CD4-positive, alpha-beta memory T cell (primary cell): ENCODE measurements at regions of chr1 and their contacts with region 1.

Region 1: GRCh38 chr1:70205434-70206118 is at the start of gene LRRC40:
- DNase-seq: peak; percentile 95 to 98 (median 95)
- H3K4me3 ChIP-seq: peak within 1 kb of the TSS; percentile 68 to 93
- H3K4me3 Mint-ChIP-seq: peak within 1 kb of the TSS; percentile 97 to 99 (median 98)
- H3K27ac ChIP-seq: peak within 1 kb of the TSS; percentile 97
- H3K27ac Mint-ChIP-seq: peak within 1 kb of the TSS; percentile 99 to 100 (median 100)
- H3K4me1 ChIP-seq: peaks cover 71% of the 10 kb centered on the region
- H3K4me1 Mint-ChIP-seq: peaks cover 40 to 89% (median 62%) of the 10 kb centered on the region in 4 donors
- H3K27me3 ChIP-seq: no peaks in the 10 kb centered on the region
- H3K27me3 Mint-ChIP-seq: no peaks in the 10 kb centered on the region
- total RNA-seq, gene LRRC40: 11.3 to 11.6 TPM

Region 2: GRCh38 chr1:70354332-70355110 is 148.9 kb after region 1 on chr1 and contains the start of gene ANKRD13C:
- CTCF ChIA-PET with region 1: no interaction called
- POLR2A ChIA-PET with region 1: interaction called, 15 read pairs
- intact Hi-C with region 1: loop called (anchors 1 kb)
- DNase-seq: peak; percentile 94 to 97 (median 95)
- H3K4me3 ChIP-seq: peak within 1 kb of the TSS; percentile 15 to 89
- H3K4me3 Mint-ChIP-seq: peak within 1 kb of the TSS; percentile 90 to 99 (median 95)
- H3K27ac ChIP-seq: peak within 1 kb of the TSS; percentile 92
- H3K27ac Mint-ChIP-seq: peak within 1 kb of the TSS; percentile 96 to 100 (median 99)
- H3K4me1 ChIP-seq: peaks cover 45% of the 10 kb centered on the region
- H3K4me1 Mint-ChIP-seq: peaks cover 24 to 53% (median 41%) of the 10 kb centered on the region in 4 donors
- H3K27me3 ChIP-seq: no peaks in the 10 kb centered on the region
- H3K27me3 Mint-ChIP-seq: no peaks in the 10 kb centered on the region
- total RNA-seq, gene ANKRD13C: 29.1 to 34.0 TPM

Region 3: GRCh38 chr1:70410604-70411359 is 205.2 kb after region 1 on chr1 and contains the start of gene CTH:
- CTCF ChIA-PET with region 1: no interaction called
- POLR2A ChIA-PET with region 1: interaction called, 11 read pairs
- intact Hi-C with region 1: loop called (anchors 1 kb)
- DNase-seq: peak; percentile 91 to 95 (median 93)
- H3K4me3 ChIP-seq: peak within 1 kb of the TSS; percentile 64 to 66
- H3K4me3 Mint-ChIP-seq: peak within 1 kb of the TSS; percentile 90 to 99 (median 97)
- H3K27ac ChIP-seq: peak within 1 kb of the TSS; percentile 77
- H3K27ac Mint-ChIP-seq: peak within 1 kb of the TSS; percentile 94 to 99 (median 96)
- H3K4me1 ChIP-seq: peaks cover 16% of the 10 kb centered on the region
- H3K4me1 Mint-ChIP-seq: peaks cover 13 to 22% (median 18%) of the 10 kb centered on the region in 4 donors
- H3K27me3 ChIP-seq: no peaks in the 10 kb centered on the region
- H3K27me3 Mint-ChIP-seq: peaks cover 0 to 3% of the 10 kb centered on the region in 2 donors
- total RNA-seq, gene CTH: 2.0 to 2.9 TPM